ENCODE measurements at regions of chr4 and their contacts with region 1.

Region 1: GRCh38 chr4:26325191-26325590 is 4.4 kb downstream of the RBPJ start:
- DNase-seq: peak; percentile 82
- H3K4me3 Mint-ChIP-seq: peak overlapping the region; percentile 98
- H3K27ac Mint-ChIP-seq: peak overlapping the region; percentile 86
- H3K4me1 Mint-ChIP-seq: peaks cover 44% of the 10 kb centered on the region
- H3K27me3 Mint-ChIP-seq: no peaks in the 10 kb centered on the region

Region 2: GRCh38 chr4:26081795-26082498 is 243.2 kb before region 1 on chr4:
- intact Hi-C with region 1: loop called (anchors 1 kb)
- DNase-seq: peak; percentile 64
- H3K4me3 Mint-ChIP-seq: peak overlapping the region; percentile 15
- H3K27ac Mint-ChIP-seq: peak overlapping the region; percentile 89
- H3K4me1 Mint-ChIP-seq: peaks cover 68% of the 10 kb centered on the region
- H3K27me3 Mint-ChIP-seq: no peaks in the 10 kb centered on the region